Right ventricle myocardium superior (tissue), 1 donor: ENCODE measurements at regions of chr6 and their contacts with region 1.

Region 1: DNA sequence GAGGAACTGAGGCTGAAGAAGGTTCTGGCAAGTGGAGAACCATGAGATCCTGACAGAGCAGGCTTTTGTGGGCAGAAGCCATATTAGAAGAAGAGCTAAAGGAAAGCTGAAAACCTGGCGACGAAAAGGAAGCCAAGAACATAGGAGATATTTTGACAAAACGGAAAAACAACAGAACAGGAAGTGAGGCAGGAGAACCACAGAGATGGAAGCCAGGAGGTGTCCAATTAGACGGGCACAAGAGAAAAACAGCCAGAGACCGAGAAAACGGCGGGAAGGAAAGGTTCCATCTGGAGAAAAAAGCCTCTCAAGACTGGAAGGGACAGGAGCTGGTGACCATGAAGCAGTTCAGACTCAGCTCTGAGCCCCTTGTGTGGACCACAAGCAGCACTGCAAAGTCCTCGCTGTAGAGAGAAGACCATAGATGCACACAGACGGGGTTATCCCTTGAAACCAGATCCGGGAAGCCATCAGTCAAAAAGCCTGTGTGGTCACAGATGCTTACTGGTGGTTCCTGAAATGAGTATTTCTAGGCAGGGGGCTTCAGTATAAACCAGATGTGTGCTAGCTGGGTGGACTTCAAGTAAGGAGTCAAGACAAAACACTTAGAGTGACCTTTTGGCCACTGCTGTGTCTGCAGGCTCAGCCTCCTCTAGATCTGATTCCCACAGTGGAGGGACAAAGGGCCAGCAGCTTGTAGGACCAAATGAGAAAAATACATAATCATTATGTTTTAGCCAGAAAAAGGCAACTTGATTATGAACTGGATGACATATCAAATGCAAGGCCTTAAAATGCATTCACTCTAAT is 30.7 kb downstream of the SSR1 start:
- DNase-seq: no peak
- ATAC-seq: no peak

Region 2: GRCh38 chr6:6901205-6901731 is 381.0 kb before region 1 on chr6:
- intact Hi-C with region 1: no loop called
- DNase-seq: no peak
- ATAC-seq: peak; percentile 18

Region 3: GRCh38 chr6:7219310-7219709 is 63.0 kb before region 1 on chr6:
- intact Hi-C with region 1: no loop called
- DNase-seq: peak; percentile 62
- ATAC-seq: peak; percentile 20

Region 4: DNA sequence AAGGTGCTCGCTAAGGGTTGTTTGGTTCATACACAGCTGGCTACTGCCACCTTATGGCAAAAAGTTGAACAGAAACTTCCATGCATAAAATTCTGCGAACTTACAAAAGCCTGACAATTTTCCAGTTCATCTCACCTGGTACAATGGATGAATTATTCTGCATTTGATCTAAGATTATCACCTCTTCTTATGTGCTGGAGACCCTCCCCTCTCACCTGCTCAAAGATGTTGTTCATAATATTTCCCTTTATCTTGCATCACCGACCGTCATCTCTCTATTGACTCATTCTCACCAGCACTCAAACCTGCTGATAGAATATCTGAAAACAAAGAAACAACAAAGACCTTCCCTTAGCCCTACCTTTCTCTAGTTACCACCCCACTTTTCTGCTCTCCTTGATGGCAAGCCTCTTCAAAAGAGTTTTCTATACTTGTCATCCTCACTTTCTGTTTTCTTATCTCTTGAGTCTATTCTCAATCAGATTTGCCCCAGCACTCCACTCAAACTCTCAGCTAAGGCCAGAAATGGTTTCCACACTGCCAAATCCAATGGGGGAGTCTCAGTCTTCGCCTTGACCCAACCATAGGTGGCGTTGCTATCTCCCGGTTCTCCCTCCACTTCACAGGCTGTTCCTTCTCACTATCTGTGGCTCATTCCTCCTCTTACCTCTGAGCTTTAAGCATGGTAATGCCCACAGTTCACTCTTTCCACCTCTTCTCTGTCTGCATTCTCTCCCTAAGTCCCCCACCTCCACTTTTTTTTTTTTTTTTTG is 333.5 kb after region 1 on chr6:
- intact Hi-C with region 1: loop called (anchors 10 kb)
- DNase-seq: no peak
- ATAC-seq: peak; percentile 71